AG04449 (cell line): ENCODE measurements at regions of chr7 and their contacts with region 1.

Region 1: GRCh38 chr7:120792091-120792860 is 65.7 kb downstream of the TSPAN12 start:
- DNase-seq: no peak
- H3K4me3 ChIP-seq: no peak overlapping the region
- CTCF ChIP-seq: peak; percentile 92

Region 2: GRCh38 chr7:120774481-120774880 is 17.8 kb before region 1 on chr7:
- CTCF ChIA-PET with region 1: interaction called, 10 read pairs
- POLR2A ChIA-PET with region 1: no interaction called
- DNase-seq: no peak
- H3K4me3 ChIP-seq: no peak overlapping the region
- CTCF ChIP-seq: no peak

Region 3: GRCh38 chr7:120805636-120806388 is 13.5 kb after region 1 on chr7:
- CTCF ChIA-PET with region 1: interaction called, 186 read pairs
- POLR2A ChIA-PET with region 1: no interaction called
- DNase-seq: no peak
- H3K4me3 ChIP-seq: no peak overlapping the region
- CTCF ChIP-seq: peak; percentile 78

Region 4: DNA sequence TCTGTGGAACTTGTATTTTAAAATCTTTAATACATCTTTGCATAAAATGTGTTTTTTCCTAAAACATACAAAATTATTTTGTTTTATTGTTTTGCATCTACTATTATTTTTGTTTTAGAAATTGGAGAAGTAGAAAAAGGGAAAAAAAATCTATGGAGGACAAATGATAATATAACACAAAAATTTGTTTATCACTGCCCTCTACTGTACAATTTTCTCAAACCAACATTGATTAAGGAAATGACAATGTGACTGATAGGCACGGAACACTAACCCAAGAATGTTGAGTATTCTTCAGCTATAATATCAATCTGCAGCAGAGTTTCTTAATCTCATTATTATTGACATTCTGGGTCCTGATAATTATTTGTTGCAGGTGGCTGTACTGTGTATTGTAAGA is 148.8 kb after region 1 on chr7:
- CTCF ChIA-PET with region 1: interaction called, 14 read pairs
- POLR2A ChIA-PET with region 1: no interaction called
- DNase-seq: no peak
- H3K4me3 ChIP-seq: no peak overlapping the region
- CTCF ChIP-seq: no peak

Region 5: DNA sequence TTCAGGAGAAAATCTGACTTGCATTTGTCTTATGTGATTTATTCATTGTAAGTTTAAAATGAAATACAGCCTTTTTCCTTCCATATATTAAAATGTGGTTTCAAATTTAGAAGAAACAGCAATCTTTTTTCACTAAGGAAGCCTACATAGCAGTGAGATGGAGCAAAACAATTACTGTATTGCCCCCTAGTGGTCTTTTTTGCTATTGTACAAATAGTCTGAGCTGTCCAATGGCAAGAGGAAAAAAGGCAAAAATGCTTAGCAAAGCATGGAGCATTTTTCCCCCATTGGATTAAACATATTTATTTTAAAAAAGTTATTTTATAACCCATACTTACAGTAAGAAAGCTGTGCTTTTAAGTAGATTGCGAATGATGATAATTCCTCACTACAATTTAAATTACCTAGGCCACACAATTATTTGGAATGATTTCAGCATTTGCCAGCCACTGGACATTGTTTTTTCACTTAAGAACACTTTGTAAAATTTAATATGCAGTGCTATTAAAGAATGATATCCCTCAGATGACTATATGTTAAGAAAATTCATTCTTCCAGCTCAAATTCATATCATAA is 315.7 kb after region 1 on chr7:
- CTCF ChIA-PET with region 1: interaction called, 86 read pairs
- POLR2A ChIA-PET with region 1: no interaction called
- DNase-seq: peak; percentile 19
- H3K4me3 ChIP-seq: no peak overlapping the region
- CTCF ChIP-seq: peak; percentile 43

Region 6: DNA sequence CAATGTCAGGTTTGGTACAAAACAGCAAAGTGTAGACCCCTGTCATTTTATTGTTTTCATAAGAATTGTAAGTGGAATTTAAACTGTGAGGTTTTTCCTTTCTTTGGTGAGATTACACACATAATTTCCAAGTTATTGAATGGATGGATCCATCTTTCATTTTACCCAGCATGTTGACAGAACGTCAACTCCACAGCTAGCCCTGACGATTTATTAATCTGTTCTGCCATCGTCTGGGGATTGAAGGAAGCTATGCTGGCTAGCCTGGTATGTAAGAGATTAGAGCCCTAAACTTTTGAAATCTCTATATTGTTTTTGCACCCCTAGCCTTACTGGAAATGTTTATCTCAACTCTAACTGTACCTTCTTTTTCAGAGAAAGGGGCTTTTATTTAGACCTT is 545.1 kb after region 1 on chr7:
- CTCF ChIA-PET with region 1: interaction called, 26 read pairs
- POLR2A ChIA-PET with region 1: no interaction called
- DNase-seq: no peak
- H3K4me3 ChIP-seq: no peak overlapping the region
- CTCF ChIP-seq: peak; percentile 28